HEK293 (cell line): ENCODE measurements at regions of chr3 and their contacts with region 1.

Region 1: GRCh38 chr3:42535981-42536790 is 33.7 kb downstream of the VIPR1 start:
- H3K4me3 ChIP-seq: no peak overlapping the region
- H3K27ac ChIP-seq: no peak overlapping the region
- H3K4me1 ChIP-seq: no peaks in the 10 kb centered on the region
- CTCF ChIP-seq: no peak

Region 2: GRCh38 chr3:42502429-42503250 is 33.5 kb before region 1 on chr3 and contains the start of gene VIPR1:
- CTCF ChIA-PET with region 1: no interaction called
- POLR2A ChIA-PET with region 1: no interaction called
- H3K4me3 ChIP-seq: peak within 1 kb of the TSS; percentile 35
- H3K27ac ChIP-seq: no peak within 1 kb of the TSS
- H3K4me1 ChIP-seq: no peaks in the 10 kb centered on the region
- CTCF ChIP-seq: no peak

Region 3: DNA sequence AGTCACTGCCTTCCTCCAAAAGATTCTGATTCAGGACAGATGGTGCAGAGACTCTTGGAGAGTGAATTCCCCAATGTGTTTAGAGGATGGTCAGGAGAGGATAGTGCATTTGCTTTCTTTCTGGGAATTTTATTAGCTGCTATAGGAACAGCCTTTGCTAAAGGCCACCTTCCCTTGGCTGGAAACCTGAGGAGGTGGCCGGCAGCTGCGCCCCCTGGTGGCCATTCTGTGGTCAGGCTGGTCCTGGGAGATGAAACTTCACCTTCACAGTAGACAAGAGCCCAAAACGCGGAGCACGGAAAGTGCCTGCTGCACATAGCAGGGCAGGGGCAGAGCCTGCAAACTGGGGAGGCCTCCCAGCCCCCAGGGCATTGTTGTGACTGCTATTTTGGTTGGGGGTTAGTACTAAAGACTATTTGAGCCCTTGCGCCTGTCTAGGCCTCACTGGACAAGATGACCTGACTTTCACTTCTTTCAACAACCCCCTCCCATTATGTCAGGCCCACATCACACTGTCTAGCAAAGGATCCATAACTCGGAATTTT is 11.3 kb after region 1 on chr3:
- CTCF ChIA-PET with region 1: interaction called, 13 read pairs
- POLR2A ChIA-PET with region 1: no interaction called
- H3K4me3 ChIP-seq: no peak overlapping the region
- H3K27ac ChIP-seq: no peak overlapping the region
- H3K4me1 ChIP-seq: no peaks in the 10 kb centered on the region
- CTCF ChIP-seq: peak; percentile 60; the same call in 1 of the 2 replicates